ENCODE measurements at regions of chr2 and their contacts with region 1.

Region 1: GRCh38 chr2:241315093-241315878 is at the start of gene HDLBP:
- DNase-seq: peak; percentile 100
- ATAC-seq: peak; percentile 73
- H3K4me3 ChIP-seq: peak within 1 kb of the TSS; percentile 91 to 92
- H3K4me3 Mint-ChIP-seq: peak within 1 kb of the TSS; percentile 98
- H3K27ac ChIP-seq: peak within 1 kb of the TSS; percentile 92 to 99
- H3K27ac Mint-ChIP-seq: peak within 1 kb of the TSS; percentile 99
- H3K4me1 ChIP-seq: peaks cover 69% of the 10 kb centered on the region
- H3K4me1 Mint-ChIP-seq: peaks cover 74% of the 10 kb centered on the region
- H3K27me3 ChIP-seq: no peaks in the 10 kb centered on the region
- H3K27me3 Mint-ChIP-seq: no peaks in the 10 kb centered on the region
- CTCF ChIP-seq: no peak
- total RNA-seq, gene HDLBP: 97.5 to 104 TPM

Region 2: DNA sequence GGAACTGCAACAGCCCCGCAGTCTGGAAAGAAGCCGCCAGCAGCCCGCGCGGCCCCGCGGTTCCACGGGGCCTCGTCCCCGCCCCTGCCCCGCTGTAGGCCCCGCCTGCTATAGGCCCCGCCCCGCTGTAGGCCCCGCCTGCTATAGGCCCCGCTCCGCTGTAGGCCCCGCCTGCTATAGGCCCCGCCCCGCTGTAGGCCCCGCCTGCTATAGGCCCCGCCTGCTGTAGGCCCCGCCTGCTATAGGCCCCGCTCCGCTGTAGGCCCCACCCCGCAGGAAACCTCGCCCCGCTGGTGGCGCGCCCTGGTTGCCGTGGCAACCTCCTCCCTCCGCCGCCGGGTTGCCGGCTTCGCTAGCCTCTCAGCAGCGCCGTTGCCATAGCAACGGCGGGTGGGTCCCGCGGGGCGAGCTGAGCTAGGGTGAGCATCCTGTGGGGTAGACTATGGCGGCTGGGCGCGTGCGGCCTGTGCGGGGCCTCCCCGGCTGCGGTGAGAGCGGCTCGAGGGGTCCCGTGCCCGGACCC is 483.0 kb before region 1 on chr2:
- CTCF ChIA-PET with region 1: no interaction called
- POLR2A ChIA-PET with region 1: no interaction called
- intact Hi-C with region 1: loop called in 1 of 2 experiments (anchors 1 kb)
- DNase-seq: peak; percentile 96 to 99 (median 99)
- ATAC-seq: peak; percentile 93
- H3K4me3 ChIP-seq: peak overlapping the region; percentile 49 to 64
- H3K4me3 Mint-ChIP-seq: no peak overlapping the region
- H3K27ac ChIP-seq: peak overlapping the region in 1 of 2 experiments; percentile 19
- H3K27ac Mint-ChIP-seq: no peak overlapping the region
- H3K4me1 ChIP-seq: peaks cover 11% of the 10 kb centered on the region
- H3K4me1 Mint-ChIP-seq: peaks cover 6% of the 10 kb centered on the region
- H3K27me3 ChIP-seq: peaks cover 4 to 9% of the 10 kb centered on the region in 2 experiments
- H3K27me3 Mint-ChIP-seq: peaks cover 12% of the 10 kb centered on the region
- CTCF ChIP-seq: no peak

Region 3: GRCh38 chr2:241123816-241124536 is 191.3 kb before region 1 on chr2:
- CTCF ChIA-PET with region 1: no interaction called
- POLR2A ChIA-PET with region 1: no interaction called
- intact Hi-C with region 1: no loop called
- DNase-seq: peak in 7 of 9 experiments; percentile 34 to 62 (median 58)
- ATAC-seq: peak; percentile 68
- H3K4me3 ChIP-seq: no peak overlapping the region
- H3K4me3 Mint-ChIP-seq: no peak overlapping the region
- H3K27ac ChIP-seq: no peak overlapping the region
- H3K27ac Mint-ChIP-seq: peak overlapping the region; percentile 67
- H3K4me1 ChIP-seq: no peaks in the 10 kb centered on the region
- H3K4me1 Mint-ChIP-seq: peaks cover 21% of the 10 kb centered on the region
- H3K27me3 ChIP-seq: no peaks in the 10 kb centered on the region
- H3K27me3 Mint-ChIP-seq: no peaks in the 10 kb centered on the region
- CTCF ChIP-seq: no peak

Region 4: DNA sequence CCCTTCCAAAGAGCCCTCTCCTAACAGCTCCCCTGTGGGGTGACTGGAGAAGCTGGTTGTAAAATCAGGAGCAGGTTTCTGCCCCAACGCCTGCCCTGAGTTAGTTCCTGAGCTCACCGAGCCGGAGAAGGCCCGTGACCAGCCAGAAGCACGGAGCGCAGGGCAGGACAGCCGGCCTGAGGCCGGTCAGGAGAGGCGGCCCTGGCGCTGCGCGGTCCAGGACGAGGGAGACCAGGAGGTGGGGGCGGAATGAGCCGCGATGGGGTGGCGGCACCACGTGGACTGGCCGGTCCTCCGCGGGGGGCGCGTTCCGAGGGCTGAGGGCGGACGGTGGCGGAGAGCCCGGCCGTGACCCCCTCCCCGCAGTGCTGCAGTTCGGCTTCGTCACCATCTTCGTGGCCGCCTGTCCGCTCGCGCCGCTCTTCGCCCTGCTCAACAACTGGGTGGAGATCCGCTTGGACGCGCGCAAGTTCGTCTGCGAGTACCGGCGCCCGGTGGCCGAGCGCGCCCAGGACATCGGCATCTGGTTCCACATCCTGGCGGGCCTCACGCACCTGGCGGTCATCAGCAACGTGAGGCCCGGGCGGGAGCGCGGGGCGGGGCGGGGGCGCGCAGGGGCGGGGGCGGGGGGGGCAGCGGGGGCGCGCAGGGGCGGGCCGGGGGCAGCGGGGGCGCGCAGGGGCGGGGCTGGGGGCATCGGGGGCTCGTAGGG is 97.8 kb before region 1 on chr2:
- CTCF ChIA-PET with region 1: interaction called, 3 read pairs
- POLR2A ChIA-PET with region 1: interaction called, 5 read pairs
- intact Hi-C with region 1: loop called in 1 of 2 experiments (anchors 1 kb)
- DNase-seq: peak in 5 of 9 experiments; percentile 25 to 64 (median 58)
- ATAC-seq: peak; percentile 42
- H3K4me3 ChIP-seq: peak overlapping the region; percentile 48 to 59
- H3K4me3 Mint-ChIP-seq: peak overlapping the region; percentile 77
- H3K27ac ChIP-seq: peak overlapping the region in 1 of 2 experiments; percentile 32
- H3K27ac Mint-ChIP-seq: no peak overlapping the region
- H3K4me1 ChIP-seq: peaks cover 5% of the 10 kb centered on the region
- H3K4me1 Mint-ChIP-seq: peaks cover 14% of the 10 kb centered on the region
- H3K27me3 ChIP-seq: no peaks in the 10 kb centered on the region
- H3K27me3 Mint-ChIP-seq: no peaks in the 10 kb centered on the region
- CTCF ChIP-seq: no peak

Region 5: GRCh38 chr2:241355983-241356870 is 40.9 kb after region 1 on chr2 and contains the start of gene FARP2:
- CTCF ChIA-PET with region 1: no interaction called
- POLR2A ChIA-PET with region 1: interaction called, 5 read pairs
- intact Hi-C with region 1: loop called (anchors 1 kb)
- DNase-seq: peak; percentile 94 to 99 (median 97)
- ATAC-seq: peak; percentile 94
- H3K4me3 ChIP-seq: peak within 1 kb of the TSS; percentile 55 to 58
- H3K4me3 Mint-ChIP-seq: peak within 1 kb of the TSS; percentile 86
- H3K27ac ChIP-seq: peak within 1 kb of the TSS; percentile 23 to 52
- H3K27ac Mint-ChIP-seq: peak within 1 kb of the TSS; percentile 87
- H3K4me1 ChIP-seq: peaks cover 10% of the 10 kb centered on the region
- H3K4me1 Mint-ChIP-seq: peaks cover 21% of the 10 kb centered on the region
- H3K27me3 ChIP-seq: no peaks in the 10 kb centered on the region
- H3K27me3 Mint-ChIP-seq: no peaks in the 10 kb centered on the region
- CTCF ChIP-seq: no peak
- total RNA-seq, gene FARP2: 20.6 to 22.5 TPM

Region 6: DNA sequence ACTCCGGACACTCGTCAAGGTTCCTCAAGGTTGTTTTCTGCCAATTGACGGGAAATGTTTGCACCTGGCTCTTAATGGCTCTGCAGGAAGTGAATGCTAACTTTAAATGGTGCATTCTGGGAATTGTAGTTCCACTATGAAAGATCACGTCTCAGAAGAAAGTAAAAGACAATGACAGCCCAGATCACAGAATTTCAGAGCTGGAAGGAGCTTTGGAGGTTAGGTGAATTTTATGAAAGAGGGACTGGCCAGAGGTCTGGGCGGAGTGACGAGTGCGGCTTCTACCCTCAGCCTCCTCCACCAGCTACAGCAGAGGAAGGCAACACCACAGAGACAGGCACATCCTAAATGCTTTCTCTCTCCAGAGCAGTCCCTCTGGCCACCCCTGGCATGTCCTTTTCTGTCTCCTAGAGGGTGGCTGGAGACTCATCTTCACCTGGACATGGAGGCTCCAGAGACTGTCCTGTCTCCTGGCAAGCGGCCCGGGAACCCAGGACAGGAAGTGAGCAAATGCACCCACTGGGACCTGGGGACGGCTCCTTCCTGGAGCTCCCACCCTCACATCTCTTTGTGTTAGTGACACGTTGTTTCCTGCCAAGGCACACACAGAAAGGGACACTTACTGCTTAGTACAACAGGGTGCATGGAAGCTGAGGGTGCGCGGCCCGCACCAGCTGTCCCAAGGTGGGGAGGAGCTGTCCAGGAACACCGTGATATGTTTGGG is 302.3 kb after region 1 on chr2:
- CTCF ChIA-PET with region 1: no interaction called
- POLR2A ChIA-PET with region 1: interaction called, 5 read pairs
- intact Hi-C with region 1: loop called (anchors 5 kb)
- DNase-seq: peak in 6 of 9 experiments; percentile 11 to 80 (median 46)
- ATAC-seq: peak; percentile 86
- H3K4me3 ChIP-seq: peak overlapping the region; percentile 55 to 73
- H3K4me3 Mint-ChIP-seq: peak overlapping the region; percentile 89
- H3K27ac ChIP-seq: peak overlapping the region; percentile 61 to 70
- H3K27ac Mint-ChIP-seq: peak overlapping the region; percentile 88
- H3K4me1 ChIP-seq: peaks cover 15% of the 10 kb centered on the region
- H3K4me1 Mint-ChIP-seq: peaks cover 31% of the 10 kb centered on the region
- H3K27me3 ChIP-seq: no peaks in the 10 kb centered on the region
- H3K27me3 Mint-ChIP-seq: no peaks in the 10 kb centered on the region
- CTCF ChIP-seq: no peak

Region 7: GRCh38 chr2:241702132-241703031 is 387.1 kb after region 1 on chr2:
- CTCF ChIA-PET with region 1: no interaction called
- POLR2A ChIA-PET with region 1: interaction called, 3 read pairs
- intact Hi-C with region 1: loop called in 1 of 2 experiments (anchors 2 kb)
- DNase-seq: peak; percentile 79 to 94 (median 92)
- ATAC-seq: peak; percentile 82
- H3K4me3 ChIP-seq: peak overlapping the region; percentile 49 to 86
- H3K4me3 Mint-ChIP-seq: peak overlapping the region; percentile 85
- H3K27ac ChIP-seq: peak overlapping the region; percentile 63 to 71
- H3K27ac Mint-ChIP-seq: peak overlapping the region; percentile 82
- H3K4me1 ChIP-seq: peaks cover 11% of the 10 kb centered on the region
- H3K4me1 Mint-ChIP-seq: peaks cover 18% of the 10 kb centered on the region
- H3K27me3 ChIP-seq: no peaks in the 10 kb centered on the region
- H3K27me3 Mint-ChIP-seq: no peaks in the 10 kb centered on the region
- CTCF ChIP-seq: peak; percentile 79

Measured in CD8-positive, alpha-beta T cell (primary cell).